ENCODE measurements at regions of chr1 and their contacts with region 1.

Region 1: GRCh38 chr1:173824331-173825081 is at the starts of genes CENPL and DARS2:
- DNase-seq: peak; percentile 95
- H3K4me3 Mint-ChIP-seq: peak within 1 kb of the TSS; percentile 93
- H3K27ac Mint-ChIP-seq: peak within 1 kb of the TSS; percentile 98
- H3K4me1 Mint-ChIP-seq: peaks cover 46% of the 10 kb centered on the region
- H3K27me3 Mint-ChIP-seq: no peaks in the 10 kb centered on the region
- total RNA-seq, gene CENPL: 31.1 to 31.9 TPM
- total RNA-seq, gene DARS2: 42.7 to 44.1 TPM

Region 2: GRCh38 chr1:173420330-173420806 is 404.1 kb before region 1 on chr1:
- CTCF ChIA-PET with region 1: interaction called, 3 read pairs
- intact Hi-C with region 1: loop called (anchors 1 kb)
- DNase-seq: peak; percentile 75
- H3K4me3 Mint-ChIP-seq: no peak overlapping the region
- H3K27ac Mint-ChIP-seq: no peak overlapping the region
- H3K4me1 Mint-ChIP-seq: peaks cover 2% of the 10 kb centered on the region
- H3K27me3 Mint-ChIP-seq: no peaks in the 10 kb centered on the region

Region 3: DNA sequence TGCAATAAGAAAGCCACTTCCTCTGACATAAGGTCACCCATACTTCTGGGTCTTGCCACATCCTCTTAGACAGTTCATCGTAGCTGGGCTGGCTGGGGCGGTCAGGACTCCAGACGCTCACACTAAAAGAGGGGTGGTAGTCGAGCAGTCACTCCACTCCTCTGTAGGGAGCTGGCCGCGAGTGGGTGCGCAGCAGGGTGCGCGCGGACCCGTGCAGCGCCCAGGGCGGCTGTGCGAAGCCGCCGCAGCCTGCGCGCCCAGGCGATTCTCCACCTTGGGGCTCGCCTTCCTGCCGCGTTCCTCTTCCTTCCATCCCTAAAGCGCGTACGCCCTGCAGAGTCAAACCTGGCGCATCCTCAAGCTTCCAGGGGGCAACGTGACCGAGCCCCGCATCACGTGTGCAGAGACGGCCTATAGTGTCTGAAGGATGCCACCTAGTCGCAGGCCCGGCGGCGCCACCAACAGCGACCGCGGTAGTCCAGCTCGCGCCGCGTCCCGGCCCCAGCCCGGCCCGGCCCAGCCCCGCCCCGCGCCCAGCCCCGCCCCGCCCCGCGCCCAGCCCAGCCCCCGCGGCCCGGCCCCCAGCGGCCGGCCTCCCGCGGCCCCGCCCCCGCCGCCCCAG is 347.7 kb before region 1 on chr1:
- CTCF ChIA-PET with region 1: interaction called, 3 read pairs
- intact Hi-C with region 1: loop called (anchors 1 kb)
- DNase-seq: peak; percentile 86
- H3K4me3 Mint-ChIP-seq: peak overlapping the region; percentile 91
- H3K27ac Mint-ChIP-seq: peak overlapping the region; percentile 93
- H3K4me1 Mint-ChIP-seq: peaks cover 58% of the 10 kb centered on the region
- H3K27me3 Mint-ChIP-seq: no peaks in the 10 kb centered on the region

Region 4: GRCh38 chr1:173714759-173715537 is 109.6 kb before region 1 on chr1 and contains the start of gene KLHL20:
- CTCF ChIA-PET with region 1: interaction called, 4 read pairs
- intact Hi-C with region 1: loop called (anchors 1 kb)
- DNase-seq: peak; percentile 91
- H3K4me3 Mint-ChIP-seq: peak within 1 kb of the TSS; percentile 97
- H3K27ac Mint-ChIP-seq: peak within 1 kb of the TSS; percentile 96
- H3K4me1 Mint-ChIP-seq: peaks cover 9% of the 10 kb centered on the region
- H3K27me3 Mint-ChIP-seq: peaks cover 15% of the 10 kb centered on the region
- total RNA-seq, gene KLHL20: 13.0 to 14.9 TPM

Region 5: DNA sequence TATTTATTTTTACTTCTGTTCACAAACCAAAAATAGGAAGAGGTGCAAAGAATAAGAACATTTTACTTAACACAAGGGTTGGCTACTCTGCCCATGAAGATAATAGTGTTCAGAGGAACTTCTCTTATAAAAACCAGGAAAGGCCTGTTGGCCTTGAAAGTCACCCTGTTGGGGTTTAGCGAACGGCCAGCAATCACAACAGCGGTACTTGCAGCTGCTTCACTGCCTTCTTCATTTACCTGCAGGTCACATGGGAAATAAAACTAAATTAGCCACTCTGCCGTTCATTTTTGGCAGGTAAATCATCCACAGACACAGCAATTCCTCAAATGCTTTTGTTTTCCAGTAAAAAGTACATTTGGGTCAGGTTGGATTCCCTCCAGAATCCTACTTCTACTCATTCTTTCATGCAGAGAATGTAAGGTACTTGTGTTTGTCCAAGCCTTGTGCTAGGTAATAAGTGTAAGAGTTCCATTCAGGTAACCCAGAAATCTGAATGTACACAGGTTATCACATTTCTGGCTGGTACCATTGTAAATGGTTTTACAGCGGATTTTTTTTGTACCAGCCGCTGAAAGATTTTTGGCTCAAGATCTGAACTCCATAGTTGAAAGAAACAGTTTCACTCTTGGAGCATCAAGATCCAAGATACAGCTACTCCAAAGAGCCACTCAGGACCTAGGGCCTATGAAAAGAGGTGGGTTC is 79.5 kb after region 1 on chr1:
- CTCF ChIA-PET with region 1: no interaction called
- intact Hi-C with region 1: no loop called
- DNase-seq: no peak
- H3K4me3 Mint-ChIP-seq: no peak overlapping the region
- H3K27ac Mint-ChIP-seq: no peak overlapping the region
- H3K4me1 Mint-ChIP-seq: peaks cover 14% of the 10 kb centered on the region
- H3K27me3 Mint-ChIP-seq: no peaks in the 10 kb centered on the region

Region 6: DNA sequence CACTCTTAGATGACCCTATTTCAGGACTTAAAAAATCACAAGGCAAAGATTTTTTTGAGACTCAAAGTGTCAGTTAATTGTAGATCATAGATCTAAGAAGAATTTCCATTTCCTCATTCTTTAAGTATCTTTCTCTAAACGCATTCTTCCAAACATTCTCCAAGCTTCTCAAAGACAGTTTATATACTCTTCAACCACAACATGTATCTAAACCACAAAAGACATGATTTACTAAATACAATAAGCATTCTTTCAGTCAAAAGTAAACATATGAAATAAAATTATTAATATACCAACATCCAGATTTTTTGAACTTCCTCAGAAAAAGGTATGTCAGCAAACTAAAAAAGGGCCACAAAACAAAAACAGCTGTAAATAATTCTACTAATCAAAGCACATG is 173.3 kb after region 1 on chr1:
- CTCF ChIA-PET with region 1: no interaction called
- intact Hi-C with region 1: no loop called
- DNase-seq: no peak
- H3K4me3 Mint-ChIP-seq: no peak overlapping the region
- H3K27ac Mint-ChIP-seq: no peak overlapping the region
- H3K4me1 Mint-ChIP-seq: peaks cover 47% of the 10 kb centered on the region
- H3K27me3 Mint-ChIP-seq: no peaks in the 10 kb centered on the region

Region 7: DNA sequence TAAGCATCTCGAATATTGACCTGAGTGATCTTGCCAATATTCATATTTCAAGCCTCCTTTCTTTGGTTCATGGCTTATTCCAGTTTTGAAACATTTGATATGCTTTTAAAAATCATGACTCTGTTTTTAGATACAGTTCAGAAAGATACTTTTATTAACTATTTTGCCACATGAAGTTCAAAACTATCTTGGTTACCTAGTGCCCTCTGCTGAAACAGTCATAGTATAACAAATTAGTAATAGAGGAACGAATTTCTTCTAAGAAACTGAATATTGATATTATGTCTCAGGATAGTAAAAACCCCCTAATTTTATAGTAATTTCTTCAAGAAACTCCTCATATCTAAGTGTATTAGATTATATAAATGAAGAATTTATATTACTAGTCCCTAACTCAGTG is 250.3 kb after region 1 on chr1:
- CTCF ChIA-PET with region 1: no interaction called
- intact Hi-C with region 1: loop called (anchors 2 kb)
- DNase-seq: no peak
- H3K4me3 Mint-ChIP-seq: no peak overlapping the region
- H3K27ac Mint-ChIP-seq: no peak overlapping the region
- H3K4me1 Mint-ChIP-seq: no peaks in the 10 kb centered on the region
- H3K27me3 Mint-ChIP-seq: no peaks in the 10 kb centered on the region

Measured in activated naive CD4-positive, alpha-beta T cell treated with anti-CD3 and anti-CD28 coated beads for 36 hours (primary cell).